Natural killer cell (primary cell): ENCODE measurements at regions of chr10 and their contacts with region 1.

Region 1: GRCh38 chr10:104121520-104122224 is at the start of gene SFR1:
- DNase-seq: peak; percentile 99
- ATAC-seq: peak; percentile 85 to 97 (median 90)
- H3K4me3 ChIP-seq: peak within 1 kb of the TSS; percentile 96
- H3K4me3 Mint-ChIP-seq: peak within 1 kb of the TSS; percentile 93
- H3K27ac ChIP-seq: peak within 1 kb of the TSS; percentile 97
- H3K27ac Mint-ChIP-seq: peak within 1 kb of the TSS; percentile 98 to 99
- H3K4me1 ChIP-seq: no peaks in the 10 kb centered on the region
- H3K4me1 Mint-ChIP-seq: peaks cover 14% of the 10 kb centered on the region in 2 donors
- H3K27me3 ChIP-seq: no peaks in the 10 kb centered on the region
- H3K27me3 Mint-ChIP-seq: peaks cover 0 to 9% of the 10 kb centered on the region in 2 donors
- CTCF ChIP-seq: peak; percentile 51
- total RNA-seq, gene SFR1: 9.1 to 19.1 (median 18.3) TPM

Region 2: DNA sequence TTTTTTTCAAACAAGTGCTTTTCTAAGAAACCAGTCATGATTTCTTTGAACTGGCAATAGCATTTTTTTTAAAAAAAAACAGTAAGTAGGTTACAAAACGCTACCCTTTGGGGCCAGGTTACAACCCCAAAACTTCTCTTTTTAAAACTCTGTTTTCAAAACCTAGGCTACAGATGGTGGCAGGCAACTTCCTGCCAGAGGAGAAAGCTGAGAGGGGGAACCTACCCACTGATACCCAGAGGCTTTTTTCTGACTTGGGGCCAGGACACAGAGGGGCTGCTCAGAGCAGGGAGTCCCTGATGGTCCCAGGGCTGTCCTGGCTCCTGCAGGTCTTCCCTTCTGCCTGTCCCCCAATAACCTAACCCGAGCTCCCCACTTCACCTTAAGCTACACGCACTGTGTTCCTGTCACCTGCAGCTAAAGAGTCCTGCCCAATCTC is 210.6 kb before region 1 on chr10:
- intact Hi-C with region 1: loop called (anchors 2 kb)
- DNase-seq: peak; percentile 20 to 81
- ATAC-seq: peak; percentile 13 to 57 (median 45)
- H3K4me3 ChIP-seq: peak overlapping the region; percentile 8
- H3K4me3 Mint-ChIP-seq: peak overlapping the region; percentile 71
- H3K27ac ChIP-seq: peak overlapping the region; percentile 84
- H3K27ac Mint-ChIP-seq: peak overlapping the region; percentile 90 to 94
- H3K4me1 ChIP-seq: peaks cover 65% of the 10 kb centered on the region
- H3K4me1 Mint-ChIP-seq: peaks cover 72 to 73% of the 10 kb centered on the region in 2 donors
- H3K27me3 ChIP-seq: no peaks in the 10 kb centered on the region
- H3K27me3 Mint-ChIP-seq: no peaks in the 10 kb centered on the region
- CTCF ChIP-seq: no peak

Region 3: GRCh38 chr10:103966671-103967447 is 154.8 kb before region 1 on chr10 and contains the start of gene SLK:
- intact Hi-C with region 1: loop called (anchors 1 kb)
- DNase-seq: peak; percentile 89 to 96
- ATAC-seq: peak; percentile 88 to 96 (median 91)
- H3K4me3 ChIP-seq: peak within 1 kb of the TSS; percentile 96
- H3K4me3 Mint-ChIP-seq: peak within 1 kb of the TSS; percentile 95
- H3K27ac ChIP-seq: peak within 1 kb of the TSS; percentile 88
- H3K27ac Mint-ChIP-seq: peak within 1 kb of the TSS; percentile 90 to 92
- H3K4me1 ChIP-seq: peaks cover 19% of the 10 kb centered on the region
- H3K4me1 Mint-ChIP-seq: peaks cover 35 to 36% of the 10 kb centered on the region in 2 donors
- H3K27me3 ChIP-seq: no peaks in the 10 kb centered on the region
- H3K27me3 Mint-ChIP-seq: no peaks in the 10 kb centered on the region
- CTCF ChIP-seq: no peak
- total RNA-seq, gene SLK: 33.4 to 48.7 (median 40.3) TPM

Region 4: DNA sequence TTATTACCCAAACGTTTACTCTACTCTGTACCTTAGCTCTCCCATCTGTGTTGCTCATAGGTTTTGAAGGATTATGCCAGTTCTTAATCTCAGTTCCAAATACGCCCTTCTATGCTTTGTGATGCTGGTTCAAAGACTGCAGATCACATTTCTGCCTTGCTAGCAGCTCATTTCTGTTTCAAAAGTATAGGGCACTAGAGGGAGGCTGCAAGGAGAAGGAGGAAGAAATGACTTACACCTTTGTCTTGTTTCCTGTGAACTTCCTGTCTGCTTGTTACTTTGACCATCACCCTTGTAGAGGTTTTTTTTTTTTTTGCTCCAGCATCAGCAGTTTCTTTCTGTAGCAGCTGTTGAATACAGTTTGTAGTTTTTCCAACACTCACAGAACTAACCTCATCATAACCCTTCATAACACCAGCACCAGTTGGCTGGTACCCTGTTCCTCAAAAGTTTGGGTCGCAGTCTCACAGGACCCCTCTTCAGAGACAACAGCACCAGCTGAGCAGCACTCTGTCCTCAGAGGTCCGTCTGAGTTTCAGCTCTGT is 138.2 kb before region 1 on chr10:
- intact Hi-C with region 1: loop called (anchors 5 kb)
- DNase-seq: peak in 1 of 2 donors; percentile 65
- ATAC-seq: peak; percentile 74 to 87 (median 83)
- H3K4me3 ChIP-seq: no peak overlapping the region
- H3K4me3 Mint-ChIP-seq: peak overlapping the region; percentile 86
- H3K27ac ChIP-seq: peak overlapping the region; percentile 46
- H3K27ac Mint-ChIP-seq: peak overlapping the region; percentile 89 to 91
- H3K4me1 ChIP-seq: peaks cover 20% of the 10 kb centered on the region
- H3K4me1 Mint-ChIP-seq: peaks cover 65 to 70% of the 10 kb centered on the region in 2 donors
- H3K27me3 ChIP-seq: no peaks in the 10 kb centered on the region
- H3K27me3 Mint-ChIP-seq: no peaks in the 10 kb centered on the region
- CTCF ChIP-seq: no peak

Region 5: GRCh38 chr10:104109908-104110662 is 11.6 kb before region 1 on chr10:
- intact Hi-C with region 1: no loop called
- DNase-seq: no peak
- ATAC-seq: no peak
- H3K4me3 ChIP-seq: no peak overlapping the region
- H3K4me3 Mint-ChIP-seq: no peak overlapping the region
- H3K27ac ChIP-seq: no peak overlapping the region
- H3K27ac Mint-ChIP-seq: no peak overlapping the region
- H3K4me1 ChIP-seq: no peaks in the 10 kb centered on the region
- H3K4me1 Mint-ChIP-seq: no peaks in the 10 kb centered on the region
- H3K27me3 ChIP-seq: peaks cover 6% of the 10 kb centered on the region
- H3K27me3 Mint-ChIP-seq: peaks cover 11 to 29% of the 10 kb centered on the region in 2 donors
- CTCF ChIP-seq: no peak

Region 6: DNA sequence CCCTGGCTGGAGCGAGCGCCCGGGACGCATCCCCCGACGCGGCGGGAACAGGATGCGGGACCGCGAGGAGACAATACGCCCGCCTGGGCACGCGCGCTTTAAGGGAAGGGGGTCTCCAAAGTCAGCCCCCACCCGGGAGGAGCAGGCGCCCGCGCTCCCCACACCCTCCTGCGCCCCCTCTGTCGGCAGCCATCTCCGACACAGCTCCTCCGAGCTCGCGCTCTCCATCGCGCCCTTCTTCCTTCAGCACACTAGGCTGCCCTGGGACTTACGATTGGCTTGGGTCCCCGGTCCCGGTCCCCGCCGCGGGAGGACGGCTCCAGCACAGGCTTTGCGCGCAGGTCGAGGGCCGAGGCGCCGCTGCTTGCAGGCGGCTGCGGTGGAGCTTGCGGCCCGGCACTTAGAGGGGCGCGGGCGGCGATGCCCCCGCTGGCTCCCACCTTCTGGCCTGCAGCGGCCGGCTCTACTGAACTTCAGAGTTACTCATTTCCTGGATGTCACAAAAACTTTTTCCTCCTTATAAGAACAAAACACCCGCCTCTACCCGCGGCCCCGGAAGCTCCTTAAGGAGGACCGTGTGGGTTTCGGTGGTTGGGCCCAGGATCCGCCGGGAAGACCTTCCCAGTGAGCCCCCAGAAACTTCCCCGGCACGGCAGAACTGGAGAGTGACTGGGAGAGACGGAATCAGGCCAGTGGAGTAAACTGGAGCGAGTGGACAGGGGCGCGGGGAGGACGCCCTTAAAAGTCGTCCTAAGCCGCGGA is 216.5 kb after region 1 on chr10 and contains the start of gene ITPRIP:
- intact Hi-C with region 1: loop called (anchors 5 kb)
- DNase-seq: peak; percentile 77 to 85
- ATAC-seq: peak; percentile 65 to 86 (median 84)
- H3K4me3 ChIP-seq: peak within 1 kb of the TSS; percentile 61
- H3K4me3 Mint-ChIP-seq: peak within 1 kb of the TSS; percentile 100
- H3K27ac ChIP-seq: peak within 1 kb of the TSS; percentile 95
- H3K27ac Mint-ChIP-seq: peak within 1 kb of the TSS; percentile 98 to 100
- H3K4me1 ChIP-seq: peaks cover 45% of the 10 kb centered on the region
- H3K4me1 Mint-ChIP-seq: peaks cover 50 to 58% of the 10 kb centered on the region in 2 donors
- H3K27me3 ChIP-seq: no peaks in the 10 kb centered on the region
- H3K27me3 Mint-ChIP-seq: peaks cover 0 to 4% of the 10 kb centered on the region in 2 donors
- CTCF ChIP-seq: no peak
- total RNA-seq, gene ITPRIP: 172 to 225 (median 176) TPM